Breast epithelium (tissue), 4 donors: ENCODE measurements at regions of chr1 and their contacts with region 1.

Region 1: DNA sequence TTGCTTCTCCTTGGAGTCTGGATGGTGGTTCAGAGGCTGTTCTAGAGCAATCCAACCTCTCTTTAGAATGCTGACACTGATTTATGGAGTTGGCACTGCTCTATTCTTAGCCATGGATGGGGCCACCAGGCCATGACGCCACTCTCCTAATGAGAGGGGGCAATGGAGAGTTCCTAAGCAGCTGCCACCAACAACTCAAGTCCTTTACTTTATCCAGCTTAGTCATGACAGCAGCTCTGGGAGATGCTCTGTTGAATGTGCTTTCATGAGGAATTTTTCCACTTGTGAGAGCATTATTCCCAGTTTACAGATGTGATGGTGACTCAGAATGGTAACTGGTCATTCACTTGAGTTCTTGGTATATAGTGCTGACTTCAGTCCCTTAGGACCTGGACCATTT is 366.3 kb downstream of the HHAT start:
- DNase-seq: no peak
- H3K4me3 ChIP-seq: no peak overlapping the region
- H3K27ac ChIP-seq: no peak overlapping the region
- H3K4me1 ChIP-seq: no peaks in the 10 kb centered on the region
- H3K27me3 ChIP-seq: no peaks in the 10 kb centered on the region
- CTCF ChIP-seq: no peak
- POLR2A ChIP-seq: no peak

Region 2: GRCh38 chr1:210633636-210634035 is 61.4 kb before region 1 on chr1:
- intact Hi-C with region 1: no loop called
- DNase-seq: no peak
- H3K4me3 ChIP-seq: no peak overlapping the region
- H3K27ac ChIP-seq: no peak overlapping the region
- H3K4me1 ChIP-seq: no peaks in the 10 kb centered on the region
- H3K27me3 ChIP-seq: no peaks in the 10 kb centered on the region
- CTCF ChIP-seq: no peak
- POLR2A ChIP-seq: no peak

Region 3: DNA sequence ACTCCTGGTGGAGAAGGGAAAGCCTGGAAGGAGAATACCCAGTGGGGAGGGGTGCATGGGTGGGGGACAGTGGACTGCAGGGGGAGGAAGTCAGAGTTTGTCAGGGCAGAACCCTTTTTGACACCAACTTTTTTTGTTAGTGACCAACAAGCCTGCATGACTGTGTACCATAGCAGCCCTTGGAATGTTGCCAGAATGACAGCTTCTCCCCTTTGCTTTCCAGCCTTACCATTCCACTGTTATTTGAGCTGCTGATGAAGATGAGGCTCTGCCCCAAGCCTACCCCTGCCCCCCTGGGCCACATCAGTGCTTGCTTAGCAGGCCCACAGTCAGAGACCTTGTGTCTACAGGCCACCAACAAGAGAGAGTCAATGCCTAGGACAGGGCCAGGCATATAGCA is 25.1 kb before region 1 on chr1:
- intact Hi-C with region 1: loop called (anchors 1 kb)
- DNase-seq: no peak
- H3K4me3 ChIP-seq: no peak overlapping the region
- H3K27ac ChIP-seq: no peak overlapping the region
- H3K4me1 ChIP-seq: no peaks in the 10 kb centered on the region
- H3K27me3 ChIP-seq: no peaks in the 10 kb centered on the region
- CTCF ChIP-seq: no peak
- POLR2A ChIP-seq: no peak

Region 4: GRCh38 chr1:210739627-210740026 is 44.6 kb after region 1 on chr1:
- intact Hi-C with region 1: loop called (anchors 2 kb)
- DNase-seq: no peak
- H3K4me3 ChIP-seq: no peak overlapping the region
- H3K27ac ChIP-seq: no peak overlapping the region
- H3K4me1 ChIP-seq: no peaks in the 10 kb centered on the region
- H3K27me3 ChIP-seq: no peaks in the 10 kb centered on the region
- CTCF ChIP-seq: no peak
- POLR2A ChIP-seq: no peak

Region 5: GRCh38 chr1:210764536-210764935 is 69.5 kb after region 1 on chr1:
- intact Hi-C with region 1: no loop called
- DNase-seq: no peak
- H3K4me3 ChIP-seq: no peak overlapping the region
- H3K27ac ChIP-seq: no peak overlapping the region
- H3K4me1 ChIP-seq: no peaks in the 10 kb centered on the region
- H3K27me3 ChIP-seq: no peaks in the 10 kb centered on the region
- CTCF ChIP-seq: no peak
- POLR2A ChIP-seq: no peak